Heart right ventricle (tissue), 16 donors: ENCODE measurements at regions of chr14 and their contacts with region 1.

Region 1: GRCh38 chr14:44756554-44756953 is 205.2 kb downstream of the KLHL28 start:
- DNase-seq: no peak
- ATAC-seq: no peak
- H3K4me3 ChIP-seq: no peak overlapping the region
- H3K27ac ChIP-seq: no peak overlapping the region
- H3K4me1 ChIP-seq: no peaks in the 10 kb centered on the region
- H3K27me3 ChIP-seq: no peaks in the 10 kb centered on the region
- CTCF ChIP-seq: no peak

Region 2: GRCh38 chr14:44768935-44769334 is 12.4 kb after region 1 on chr14:
- intact Hi-C with region 1: loop called in 1 of 10 experiments (anchors 1 kb)
- DNase-seq: no peak
- ATAC-seq: no peak
- H3K4me3 ChIP-seq: no peak overlapping the region
- H3K27ac ChIP-seq: no peak overlapping the region
- H3K4me1 ChIP-seq: no peaks in the 10 kb centered on the region
- H3K27me3 ChIP-seq: no peaks in the 10 kb centered on the region
- CTCF ChIP-seq: no peak